CD8-positive, alpha-beta T cell (primary cell): ENCODE measurements at regions of chr16 and their contacts with region 1.

Region 1: GRCh38 chr16:27408012-27408601 is 6.1 kb downstream of the IL21R start:
- DNase-seq: peak in 4 of 9 experiments; percentile 51 to 73 (median 56)
- ATAC-seq: peak; percentile 52
- H3K4me3 ChIP-seq: peak overlapping the region; percentile 2 to 11
- H3K4me3 Mint-ChIP-seq: peak overlapping the region; percentile 97
- H3K27ac ChIP-seq: peak overlapping the region; percentile 17 to 66
- H3K27ac Mint-ChIP-seq: peak overlapping the region; percentile 91
- H3K4me1 ChIP-seq: peaks cover 63% of the 10 kb centered on the region
- H3K4me1 Mint-ChIP-seq: peaks cover 85% of the 10 kb centered on the region
- H3K27me3 ChIP-seq: no peaks in the 10 kb centered on the region
- H3K27me3 Mint-ChIP-seq: no peaks in the 10 kb centered on the region
- CTCF ChIP-seq: no peak

Region 2: GRCh38 chr16:27374804-27375425 is 33.2 kb before region 1 on chr16:
- CTCF ChIA-PET with region 1: interaction called, 9 read pairs
- POLR2A ChIA-PET with region 1: interaction called, 15 read pairs
- intact Hi-C with region 1: loop called in 1 of 2 experiments (anchors 2 kb)
- DNase-seq: peak in 6 of 9 experiments; percentile 46 to 65 (median 58)
- ATAC-seq: peak; percentile 39
- H3K4me3 ChIP-seq: no peak overlapping the region
- H3K4me3 Mint-ChIP-seq: no peak overlapping the region
- H3K27ac ChIP-seq: no peak overlapping the region
- H3K27ac Mint-ChIP-seq: no peak overlapping the region
- H3K4me1 ChIP-seq: peaks cover 63% of the 10 kb centered on the region
- H3K4me1 Mint-ChIP-seq: peaks cover 42% of the 10 kb centered on the region
- H3K27me3 ChIP-seq: no peaks in the 10 kb centered on the region
- H3K27me3 Mint-ChIP-seq: no peaks in the 10 kb centered on the region
- CTCF ChIP-seq: peak; percentile 42

Region 3: GRCh38 chr16:27426423-27427408 is 18.6 kb after region 1 on chr16:
- CTCF ChIA-PET with region 1: interaction called, 4 read pairs
- POLR2A ChIA-PET with region 1: no interaction called
- intact Hi-C with region 1: loop called in 1 of 2 experiments (anchors 2 kb)
- DNase-seq: peak in 8 of 9 experiments; percentile 67 to 89 (median 81)
- ATAC-seq: peak; percentile 87
- H3K4me3 ChIP-seq: no peak overlapping the region
- H3K4me3 Mint-ChIP-seq: no peak overlapping the region
- H3K27ac ChIP-seq: peak overlapping the region in 1 of 2 experiments; percentile 69
- H3K27ac Mint-ChIP-seq: peak overlapping the region; percentile 69
- H3K4me1 ChIP-seq: peaks cover 22% of the 10 kb centered on the region
- H3K4me1 Mint-ChIP-seq: peaks cover 57% of the 10 kb centered on the region
- H3K27me3 ChIP-seq: no peaks in the 10 kb centered on the region
- H3K27me3 Mint-ChIP-seq: no peaks in the 10 kb centered on the region
- CTCF ChIP-seq: no peak

Region 4: GRCh38 chr16:27449434-27450195 is 41.5 kb after region 1 on chr16:
- CTCF ChIA-PET with region 1: interaction called, 9 read pairs
- POLR2A ChIA-PET with region 1: interaction called, 76 read pairs
- intact Hi-C with region 1: loop called in 1 of 2 experiments (anchors 2 kb)
- DNase-seq: peak; percentile 63 to 97 (median 80)
- ATAC-seq: peak; percentile 60
- H3K4me3 ChIP-seq: peak overlapping the region; percentile 17 to 26
- H3K4me3 Mint-ChIP-seq: peak overlapping the region; percentile 70
- H3K27ac ChIP-seq: peak overlapping the region; percentile 60 to 91
- H3K27ac Mint-ChIP-seq: peak overlapping the region; percentile 99
- H3K4me1 ChIP-seq: peaks cover 68% of the 10 kb centered on the region
- H3K4me1 Mint-ChIP-seq: peaks cover 87% of the 10 kb centered on the region
- H3K27me3 ChIP-seq: no peaks in the 10 kb centered on the region
- H3K27me3 Mint-ChIP-seq: no peaks in the 10 kb centered on the region
- CTCF ChIP-seq: no peak